ENCODE measurements at regions of chr13 and their contacts with region 1.

Region 1: GRCh38 chr13:61563645-61564044 is 148.0 kb upstream of the PCDH20 start:
- DNase-seq: no peak
- ATAC-seq: no peak
- H3K4me3 ChIP-seq: no peak overlapping the region
- H3K27ac ChIP-seq: no peak overlapping the region
- H3K4me1 ChIP-seq: no peaks in the 10 kb centered on the region
- H3K27me3 ChIP-seq: no peaks in the 10 kb centered on the region
- CTCF ChIP-seq: no peak
- POLR2A ChIP-seq: no peak
- RAD21 ChIP-seq: no peak

Region 2: GRCh38 chr13:61500176-61500575 is 63.5 kb before region 1 on chr13:
- CTCF ChIA-PET with region 1: no interaction called
- POLR2A ChIA-PET with region 1: no interaction called
- RAD21 ChIA-PET with region 1: no interaction called
- intact Hi-C with region 1: loop called (anchors 10 kb)
- DNase-seq: no peak
- ATAC-seq: no peak
- H3K4me3 ChIP-seq: no peak overlapping the region
- H3K27ac ChIP-seq: no peak overlapping the region
- H3K4me1 ChIP-seq: no peaks in the 10 kb centered on the region
- H3K27me3 ChIP-seq: no peaks in the 10 kb centered on the region
- CTCF ChIP-seq: no peak
- POLR2A ChIP-seq: no peak
- RAD21 ChIP-seq: no peak

Region 3: GRCh38 chr13:61600360-61601033 is 36.9 kb after region 1 on chr13:
- CTCF ChIA-PET with region 1: no interaction called
- POLR2A ChIA-PET with region 1: no interaction called
- RAD21 ChIA-PET with region 1: no interaction called
- intact Hi-C with region 1: no loop called
- DNase-seq: no peak
- ATAC-seq: no peak
- H3K4me3 ChIP-seq: no peak overlapping the region
- H3K27ac ChIP-seq: no peak overlapping the region
- H3K4me1 ChIP-seq: no peaks in the 10 kb centered on the region
- H3K27me3 ChIP-seq: no peaks in the 10 kb centered on the region
- CTCF ChIP-seq: no peak
- POLR2A ChIP-seq: no peak
- RAD21 ChIP-seq: no peak